Panc1 (cell line): ENCODE measurements at regions of chr6 and their contacts with region 1.

Region 1: GRCh38 chr6:44556046-44556445 is 168.5 kb downstream of the CDC5L start:
- DNase-seq: no peak
- ATAC-seq: no peak
- H3K4me3 ChIP-seq: no peak overlapping the region
- H3K27ac ChIP-seq: no peak overlapping the region
- H3K4me1 ChIP-seq: no peaks in the 10 kb centered on the region; the same call in 1 of the 2 replicates
- H3K27me3 ChIP-seq: no peaks in the 10 kb centered on the region; the same call in 1 of the 2 replicates
- CTCF ChIP-seq: no peak

Region 2: DNA sequence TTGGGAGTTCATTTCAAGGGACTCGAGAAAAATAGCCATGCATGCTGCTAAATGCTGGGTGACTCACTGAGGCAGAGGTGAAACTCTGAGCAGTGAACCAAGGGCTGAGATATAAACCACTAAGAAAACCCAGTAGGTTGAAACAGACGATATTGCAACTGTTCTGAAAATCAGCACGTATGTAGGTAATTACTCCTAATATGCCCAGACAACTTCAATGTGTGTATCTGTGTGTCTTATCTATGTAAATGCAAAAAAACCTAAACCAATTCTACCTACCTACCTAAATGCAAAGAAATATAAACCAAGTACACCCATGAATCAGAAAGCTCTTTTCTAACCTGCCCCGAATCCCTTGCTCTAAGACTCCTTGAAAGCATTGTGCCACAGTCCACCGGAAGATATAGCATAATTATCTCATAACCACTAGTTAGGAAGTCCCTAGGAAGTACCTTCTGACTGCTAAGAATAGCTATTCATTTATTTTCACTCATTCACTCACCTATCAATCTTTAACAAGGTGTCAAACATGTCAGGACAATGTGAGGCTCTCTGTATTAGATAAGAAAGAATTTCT is 313.4 kb after region 1 on chr6:
- CTCF ChIA-PET with region 1: no interaction called
- POLR2A ChIA-PET with region 1: interaction called, 15 read pairs
- in situ Hi-C with region 1: no loop called
- intact Hi-C with region 1: no loop called
- DNase-seq: no peak
- ATAC-seq: no peak
- H3K4me3 ChIP-seq: no peak overlapping the region
- H3K27ac ChIP-seq: no peak overlapping the region
- H3K4me1 ChIP-seq: no peaks in the 10 kb centered on the region
- H3K27me3 ChIP-seq: no peaks in the 10 kb centered on the region
- CTCF ChIP-seq: no peak